ENCODE measurements at regions of chr2 and their contacts with region 1.

Region 1: GRCh38 chr2:234382131-234382530 is 114.8 kb downstream of the ARL4C start:
- DNase-seq: no peak
- ATAC-seq: no peak
- H3K4me3 ChIP-seq: no peak overlapping the region
- H3K4me3 Mint-ChIP-seq: no peak overlapping the region
- H3K27ac ChIP-seq: no peak overlapping the region
- H3K27ac Mint-ChIP-seq: no peak overlapping the region
- H3K4me1 ChIP-seq: no peaks in the 10 kb centered on the region
- H3K4me1 Mint-ChIP-seq: peaks cover 5% of the 10 kb centered on the region
- H3K27me3 ChIP-seq: no peaks in the 10 kb centered on the region
- H3K27me3 Mint-ChIP-seq: no peaks in the 10 kb centered on the region
- CTCF ChIP-seq: no peak

Region 2: GRCh38 chr2:234335661-234336228 is 46.4 kb before region 1 on chr2:
- CTCF ChIA-PET with region 1: interaction called, 3 read pairs
- POLR2A ChIA-PET with region 1: no interaction called
- intact Hi-C with region 1: loop called in 1 of 2 experiments (anchors 5 kb)
- DNase-seq: peak; percentile 21 to 92 (median 53)
- ATAC-seq: peak; percentile 93
- H3K4me3 ChIP-seq: no peak overlapping the region
- H3K4me3 Mint-ChIP-seq: peak overlapping the region; percentile 75
- H3K27ac ChIP-seq: no peak overlapping the region
- H3K27ac Mint-ChIP-seq: peak overlapping the region; percentile 83
- H3K4me1 ChIP-seq: peaks cover 19% of the 10 kb centered on the region
- H3K4me1 Mint-ChIP-seq: peaks cover 38% of the 10 kb centered on the region
- H3K27me3 ChIP-seq: no peaks in the 10 kb centered on the region
- H3K27me3 Mint-ChIP-seq: no peaks in the 10 kb centered on the region
- CTCF ChIP-seq: no peak

Region 3: GRCh38 chr2:234419726-234420125 is 37.6 kb after region 1 on chr2:
- CTCF ChIA-PET with region 1: no interaction called
- POLR2A ChIA-PET with region 1: no interaction called
- intact Hi-C with region 1: loop called in 1 of 2 experiments (anchors 5 kb)
- DNase-seq: no peak
- ATAC-seq: no peak
- H3K4me3 ChIP-seq: no peak overlapping the region
- H3K4me3 Mint-ChIP-seq: no peak overlapping the region
- H3K27ac ChIP-seq: peak overlapping the region; percentile 32 to 33
- H3K27ac Mint-ChIP-seq: peak overlapping the region; percentile 97
- H3K4me1 ChIP-seq: peaks cover 58% of the 10 kb centered on the region
- H3K4me1 Mint-ChIP-seq: peaks cover 83% of the 10 kb centered on the region
- H3K27me3 ChIP-seq: no peaks in the 10 kb centered on the region
- H3K27me3 Mint-ChIP-seq: no peaks in the 10 kb centered on the region
- CTCF ChIP-seq: no peak

Region 4: DNA sequence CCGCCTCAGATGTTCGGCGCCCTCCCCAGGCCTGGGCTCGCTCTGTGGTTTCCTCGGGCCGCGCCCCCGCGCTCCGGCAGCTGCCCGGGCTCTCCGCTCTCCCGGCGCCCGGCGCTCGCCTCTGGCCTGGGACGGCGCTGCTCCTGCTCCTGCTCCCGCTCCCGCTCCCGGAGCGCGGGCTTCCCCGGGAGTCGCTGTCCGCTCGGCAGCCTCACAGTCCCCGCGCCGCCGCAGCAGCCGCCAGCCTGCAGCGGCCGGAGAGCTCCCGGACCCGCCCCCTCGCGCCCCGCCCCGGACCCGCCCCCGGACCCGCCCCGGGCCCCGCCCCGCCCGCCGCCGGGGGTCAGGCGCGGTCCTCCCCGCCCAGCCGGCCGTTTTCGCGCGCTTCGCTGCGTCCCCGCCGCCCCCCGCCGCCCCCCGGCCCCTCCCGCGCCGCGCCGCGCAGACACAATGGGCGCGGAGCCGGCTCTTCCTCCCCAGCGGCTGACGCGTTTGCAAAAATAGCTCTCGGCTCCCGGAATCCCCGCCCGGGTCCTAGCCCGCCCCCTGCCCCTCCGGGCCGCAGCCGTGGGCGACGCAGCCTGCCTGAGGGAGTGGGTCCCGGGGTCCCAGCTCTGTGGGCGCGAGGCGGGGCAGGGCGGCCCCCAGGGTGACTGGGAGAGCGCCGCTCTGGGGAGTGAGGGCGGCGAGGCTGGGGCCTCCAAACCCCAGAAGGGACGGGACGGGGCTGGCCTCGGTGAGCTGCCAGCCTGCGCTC is 114.9 kb after region 1 on chr2 and contains the start of gene ARL4C:
- CTCF ChIA-PET with region 1: no interaction called
- POLR2A ChIA-PET with region 1: no interaction called
- intact Hi-C with region 1: no loop called
- DNase-seq: peak; percentile 33 to 88 (median 69)
- ATAC-seq: peak; percentile 38
- H3K4me3 ChIP-seq: peak within 1 kb of the TSS; percentile 94
- H3K4me3 Mint-ChIP-seq: peak within 1 kb of the TSS; percentile 98
- H3K27ac ChIP-seq: peak within 1 kb of the TSS; percentile 70 to 96
- H3K27ac Mint-ChIP-seq: peak within 1 kb of the TSS; percentile 98
- H3K4me1 ChIP-seq: peaks cover 34% of the 10 kb centered on the region
- H3K4me1 Mint-ChIP-seq: peaks cover 53% of the 10 kb centered on the region
- H3K27me3 ChIP-seq: no peaks in the 10 kb centered on the region
- H3K27me3 Mint-ChIP-seq: peaks cover 5% of the 10 kb centered on the region
- CTCF ChIP-seq: no peak
- total RNA-seq, gene ARL4C: 469 to 471 TPM

Region 5: DNA sequence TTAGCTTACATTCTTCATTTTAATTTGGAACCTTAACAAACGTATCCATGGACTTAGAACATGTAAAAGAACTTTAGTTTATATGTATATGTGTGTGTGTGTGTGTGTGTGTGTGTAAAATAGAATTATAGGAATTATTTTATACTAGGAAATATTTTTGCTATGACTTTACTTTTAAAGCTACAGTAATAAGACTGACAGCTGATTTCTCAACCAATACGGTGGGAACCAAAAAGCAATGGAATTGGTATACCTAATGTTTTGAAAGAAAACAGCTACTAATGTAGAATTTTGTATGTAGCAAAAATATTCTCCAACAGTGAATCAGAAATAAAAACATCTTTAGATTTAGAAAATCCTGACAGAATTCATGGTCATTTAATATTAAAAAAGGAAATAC is 261.3 kb after region 1 on chr2:
- CTCF ChIA-PET with region 1: no interaction called
- POLR2A ChIA-PET with region 1: no interaction called
- intact Hi-C with region 1: no loop called
- DNase-seq: no peak
- ATAC-seq: no peak
- H3K4me3 ChIP-seq: no peak overlapping the region
- H3K4me3 Mint-ChIP-seq: no peak overlapping the region
- H3K27ac ChIP-seq: no peak overlapping the region
- H3K27ac Mint-ChIP-seq: no peak overlapping the region
- H3K4me1 ChIP-seq: no peaks in the 10 kb centered on the region
- H3K4me1 Mint-ChIP-seq: no peaks in the 10 kb centered on the region
- H3K27me3 ChIP-seq: no peaks in the 10 kb centered on the region
- H3K27me3 Mint-ChIP-seq: peaks cover 23% of the 10 kb centered on the region
- CTCF ChIP-seq: no peak